Mammary epithelial cell (primary cell): ENCODE measurements at regions of chr22 and their contacts with region 1.

Region 1: GRCh38 chr22:49297871-49298721 is 529.6 kb downstream of the BRD1 start:
- DNase-seq: no peak
- H3K4me3 ChIP-seq: no peak overlapping the region
- H3K27ac ChIP-seq: no peak overlapping the region
- H3K4me1 ChIP-seq: no peaks in the 10 kb centered on the region
- H3K27me3 ChIP-seq: no peaks in the 10 kb centered on the region
- CTCF ChIP-seq: no peak

Region 2: DNA sequence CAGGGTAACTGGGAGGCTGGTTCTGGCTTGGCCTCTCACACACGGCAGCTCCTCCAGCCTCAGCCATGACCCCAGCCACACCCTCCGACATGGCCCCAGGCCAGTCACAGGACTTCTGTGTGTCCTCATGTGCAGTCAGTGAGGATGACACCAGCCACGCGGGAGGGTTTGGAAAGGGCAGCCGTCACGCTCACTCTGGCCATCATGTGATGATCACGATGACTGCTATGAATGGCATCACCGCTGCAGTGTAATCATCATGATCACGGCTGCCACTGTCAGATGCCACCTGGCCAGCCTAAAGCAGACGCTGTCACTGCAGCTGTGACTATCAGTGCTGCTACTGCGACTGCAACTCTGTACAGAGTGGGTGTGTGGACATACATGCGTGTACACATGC is 111.3 kb before region 1 on chr22:
- CTCF ChIA-PET with region 1: no interaction called
- dilution Hi-C with region 1: loop called (anchors 5 kb)
- in situ Hi-C with region 1: no loop called
- intact Hi-C with region 1: no loop called
- DNase-seq: no peak
- H3K4me3 ChIP-seq: no peak overlapping the region
- H3K27ac ChIP-seq: no peak overlapping the region
- H3K4me1 ChIP-seq: no peaks in the 10 kb centered on the region
- H3K27me3 ChIP-seq: no peaks in the 10 kb centered on the region
- CTCF ChIP-seq: no peak

Region 3: DNA sequence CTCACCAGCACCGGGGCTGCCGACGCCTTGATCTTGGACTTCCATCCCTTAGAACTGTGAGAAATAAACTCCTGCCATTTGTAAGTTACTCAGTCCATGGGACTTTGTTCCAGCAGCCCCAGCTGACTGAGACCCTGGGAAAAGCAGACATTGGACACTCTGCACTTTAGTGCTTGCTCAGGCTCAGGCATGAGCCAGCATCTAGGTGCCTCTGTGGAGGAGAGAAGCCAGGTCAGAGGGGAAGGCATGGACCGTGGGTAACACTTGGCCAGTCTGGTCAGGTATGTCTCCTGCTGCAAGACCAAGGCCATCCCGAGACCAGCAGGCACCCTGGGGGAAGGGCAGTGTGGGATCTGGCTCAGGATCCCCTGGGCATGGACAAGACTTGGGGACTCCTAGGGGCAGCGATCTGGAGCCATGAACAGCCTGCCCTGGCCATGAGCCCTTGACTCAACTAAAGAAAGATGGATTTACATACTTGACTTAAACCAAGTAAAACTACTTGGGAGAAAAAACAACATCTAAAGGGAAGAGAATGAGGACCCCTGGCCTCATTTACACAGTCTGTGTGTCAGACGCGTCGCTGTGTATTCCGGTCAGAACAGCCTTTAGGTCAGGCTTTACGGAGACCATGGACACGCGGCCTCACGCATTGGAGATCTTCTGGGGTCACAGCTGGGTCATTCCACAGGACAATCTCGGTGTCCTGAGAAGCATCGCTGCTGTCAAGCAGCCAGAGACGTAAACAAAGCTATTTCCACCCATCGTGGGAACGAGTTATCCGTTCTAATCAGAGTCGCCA is 32.5 kb after region 1 on chr22:
- CTCF ChIA-PET with region 1: no interaction called
- dilution Hi-C with region 1: loop called (anchors 5 kb)
- in situ Hi-C with region 1: no loop called
- intact Hi-C with region 1: no loop called
- DNase-seq: no peak
- H3K4me3 ChIP-seq: no peak overlapping the region
- H3K27ac ChIP-seq: no peak overlapping the region
- H3K4me1 ChIP-seq: no peaks in the 10 kb centered on the region
- H3K27me3 ChIP-seq: no peaks in the 10 kb centered on the region
- CTCF ChIP-seq: no peak